ENCODE measurements at regions of chr6 and their contacts with region 1.

Region 1: DNA sequence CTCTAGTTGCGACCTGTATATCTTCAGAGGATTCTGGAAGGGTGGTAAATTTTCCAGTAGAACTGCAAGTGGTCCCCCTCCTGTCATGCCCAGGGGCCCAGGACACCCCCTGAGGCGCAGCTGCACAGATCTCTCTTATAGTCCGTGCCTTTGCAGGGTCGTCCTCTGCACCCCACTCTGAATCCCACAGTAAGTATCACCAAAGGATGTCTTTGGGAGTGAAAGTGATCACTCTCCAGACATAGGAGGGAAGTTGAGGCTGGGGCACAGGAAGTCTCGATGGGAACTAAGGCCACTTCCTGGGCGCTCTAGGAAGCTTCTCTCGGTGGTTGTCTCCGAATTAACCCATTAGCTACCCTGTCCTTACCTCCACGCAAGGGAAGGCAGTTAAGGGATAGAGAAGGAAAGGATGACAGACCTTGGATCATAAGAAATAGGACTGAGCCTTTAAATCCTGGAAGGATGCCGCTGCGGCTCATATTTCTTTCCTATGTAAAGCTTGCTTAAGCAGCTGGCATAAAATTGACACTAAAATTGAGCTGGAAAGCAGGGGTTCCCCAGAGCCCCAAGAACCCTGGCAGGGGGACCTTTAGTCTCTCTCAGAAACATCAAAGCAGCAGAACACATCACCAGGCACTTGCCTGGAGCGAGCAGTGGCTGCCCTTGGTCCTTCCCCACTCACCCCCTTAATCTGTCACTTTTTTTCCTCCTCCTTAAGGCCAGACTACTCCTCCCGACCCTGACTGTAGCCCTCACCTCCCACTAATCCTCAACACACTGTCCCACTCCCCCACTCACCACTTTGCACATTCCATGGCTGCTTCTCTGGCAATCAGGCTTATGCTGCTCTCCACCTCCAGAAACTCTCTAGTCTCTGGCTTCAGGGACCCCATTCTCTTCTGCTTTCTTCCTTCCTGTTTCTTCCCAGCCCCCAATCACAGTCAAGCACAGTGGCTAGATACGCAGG is at the start of gene ZKSCAN4:
- DNase-seq: peak; percentile 64 to 92 (median 85)
- ATAC-seq: peak; percentile 92
- H3K4me3 ChIP-seq: peak within 1 kb of the TSS; percentile 85 to 94
- H3K4me3 Mint-ChIP-seq: peak within 1 kb of the TSS; percentile 98
- H3K27ac ChIP-seq: peak within 1 kb of the TSS; percentile 50 to 66
- H3K27ac Mint-ChIP-seq: peak within 1 kb of the TSS; percentile 97
- H3K4me1 ChIP-seq: peaks cover 18% of the 10 kb centered on the region
- H3K4me1 Mint-ChIP-seq: peaks cover 40% of the 10 kb centered on the region
- H3K27me3 ChIP-seq: no peaks in the 10 kb centered on the region
- H3K27me3 Mint-ChIP-seq: peaks cover 3% of the 10 kb centered on the region
- CTCF ChIP-seq: no peak
- total RNA-seq, gene ZKSCAN4: 1.4 TPM

Region 2: DNA sequence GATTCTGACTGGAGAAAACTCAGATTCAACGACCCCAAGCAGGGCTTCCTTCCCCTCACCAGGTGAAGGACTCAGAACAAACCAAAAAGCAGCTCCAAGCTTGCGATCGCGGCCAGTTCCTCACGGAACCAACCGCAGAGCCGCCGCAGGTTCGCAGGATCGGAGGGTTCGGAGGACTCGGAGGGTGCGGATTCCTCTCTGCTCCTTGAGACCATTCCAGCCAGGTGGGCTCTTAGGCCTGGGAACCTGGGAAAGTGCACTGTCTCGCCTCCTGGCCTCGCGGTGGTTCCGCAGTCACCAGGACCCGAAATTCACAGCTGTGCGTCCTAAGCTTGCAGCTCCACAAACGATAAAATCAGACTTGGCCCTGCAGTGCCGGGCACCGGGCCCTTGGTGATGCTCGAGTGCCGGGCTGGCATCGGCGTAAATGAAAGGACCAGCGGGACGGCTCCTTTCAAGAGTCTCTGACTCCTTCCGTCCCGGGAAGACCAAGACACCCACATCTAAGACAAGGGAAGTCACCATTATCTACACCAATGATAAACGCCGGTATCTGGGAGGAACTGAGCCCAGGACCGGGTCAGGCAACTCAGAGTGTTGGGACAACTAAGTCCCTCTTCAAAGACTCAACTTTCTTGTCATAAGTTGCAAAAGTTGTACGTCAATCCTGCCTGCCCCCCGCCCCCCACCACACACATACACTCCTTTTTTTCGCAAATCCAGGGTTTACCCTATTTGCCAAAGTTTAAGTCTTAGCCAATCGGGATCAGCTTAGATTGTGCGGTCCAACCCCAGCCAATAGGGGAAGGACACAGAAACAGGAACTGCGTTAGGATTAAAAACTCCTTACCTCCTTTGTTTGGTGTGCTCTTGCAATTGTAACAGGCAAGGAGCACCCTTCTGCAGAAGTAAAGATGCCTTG is 1074.5 kb before region 1 on chr6:
- CTCF ChIA-PET with region 1: interaction called, 3 read pairs
- POLR2A ChIA-PET with region 1: no interaction called
- intact Hi-C with region 1: loop called in 1 of 2 experiments (anchors 10 kb)
- DNase-seq: peak; percentile 46 to 89 (median 72)
- ATAC-seq: peak; percentile 69
- H3K4me3 ChIP-seq: peak overlapping the region; percentile 95 to 100
- H3K4me3 Mint-ChIP-seq: peak overlapping the region; percentile 93
- H3K27ac ChIP-seq: peak overlapping the region; percentile 48 to 68
- H3K27ac Mint-ChIP-seq: peak overlapping the region; percentile 91
- H3K4me1 ChIP-seq: no peaks in the 10 kb centered on the region
- H3K4me1 Mint-ChIP-seq: peaks cover 17% of the 10 kb centered on the region
- H3K27me3 ChIP-seq: no peaks in the 10 kb centered on the region
- H3K27me3 Mint-ChIP-seq: peaks cover 3% of the 10 kb centered on the region
- CTCF ChIP-seq: peak; percentile 11

Region 3: GRCh38 chr6:28124102-28124970 is 128.0 kb before region 1 on chr6 and contains the start of gene ZSCAN16:
- CTCF ChIA-PET with region 1: no interaction called
- POLR2A ChIA-PET with region 1: no interaction called
- intact Hi-C with region 1: loop called in 1 of 2 experiments (anchors 1 kb)
- DNase-seq: peak; percentile 59 to 86 (median 76)
- ATAC-seq: peak; percentile 72
- H3K4me3 ChIP-seq: peak within 1 kb of the TSS; percentile 79 to 86
- H3K4me3 Mint-ChIP-seq: peak within 1 kb of the TSS; percentile 95
- H3K27ac ChIP-seq: peak within 1 kb of the TSS; percentile 76 to 89
- H3K27ac Mint-ChIP-seq: peak within 1 kb of the TSS; percentile 97
- H3K4me1 ChIP-seq: peaks cover 11% of the 10 kb centered on the region
- H3K4me1 Mint-ChIP-seq: peaks cover 42% of the 10 kb centered on the region
- H3K27me3 ChIP-seq: no peaks in the 10 kb centered on the region
- H3K27me3 Mint-ChIP-seq: no peaks in the 10 kb centered on the region
- CTCF ChIP-seq: no peak
- total RNA-seq, gene ZSCAN16: 5.2 to 6.0 TPM

Region 4: GRCh38 chr6:28225056-28225834 is 27.0 kb before region 1 on chr6 and contains the start of gene ZSCAN9:
- CTCF ChIA-PET with region 1: no interaction called
- POLR2A ChIA-PET with region 1: no interaction called
- intact Hi-C with region 1: loop called in 1 of 2 experiments (anchors 1 kb)
- DNase-seq: peak in 7 of 9 experiments; percentile 20 to 72 (median 52)
- ATAC-seq: peak; percentile 66
- H3K4me3 ChIP-seq: peak within 1 kb of the TSS; percentile 64 to 80
- H3K4me3 Mint-ChIP-seq: peak within 1 kb of the TSS; percentile 92
- H3K27ac ChIP-seq: peak within 1 kb of the TSS in 1 of 2 experiments; percentile 55
- H3K27ac Mint-ChIP-seq: peak within 1 kb of the TSS; percentile 42
- H3K4me1 ChIP-seq: peaks cover 12% of the 10 kb centered on the region
- H3K4me1 Mint-ChIP-seq: peaks cover 13% of the 10 kb centered on the region
- H3K27me3 ChIP-seq: peaks cover 5 to 9% of the 10 kb centered on the region in 2 experiments
- H3K27me3 Mint-ChIP-seq: peaks cover 45% of the 10 kb centered on the region
- CTCF ChIP-seq: no peak
- total RNA-seq, gene ZSCAN9: 2.1 to 3.0 TPM

Region 5: DNA sequence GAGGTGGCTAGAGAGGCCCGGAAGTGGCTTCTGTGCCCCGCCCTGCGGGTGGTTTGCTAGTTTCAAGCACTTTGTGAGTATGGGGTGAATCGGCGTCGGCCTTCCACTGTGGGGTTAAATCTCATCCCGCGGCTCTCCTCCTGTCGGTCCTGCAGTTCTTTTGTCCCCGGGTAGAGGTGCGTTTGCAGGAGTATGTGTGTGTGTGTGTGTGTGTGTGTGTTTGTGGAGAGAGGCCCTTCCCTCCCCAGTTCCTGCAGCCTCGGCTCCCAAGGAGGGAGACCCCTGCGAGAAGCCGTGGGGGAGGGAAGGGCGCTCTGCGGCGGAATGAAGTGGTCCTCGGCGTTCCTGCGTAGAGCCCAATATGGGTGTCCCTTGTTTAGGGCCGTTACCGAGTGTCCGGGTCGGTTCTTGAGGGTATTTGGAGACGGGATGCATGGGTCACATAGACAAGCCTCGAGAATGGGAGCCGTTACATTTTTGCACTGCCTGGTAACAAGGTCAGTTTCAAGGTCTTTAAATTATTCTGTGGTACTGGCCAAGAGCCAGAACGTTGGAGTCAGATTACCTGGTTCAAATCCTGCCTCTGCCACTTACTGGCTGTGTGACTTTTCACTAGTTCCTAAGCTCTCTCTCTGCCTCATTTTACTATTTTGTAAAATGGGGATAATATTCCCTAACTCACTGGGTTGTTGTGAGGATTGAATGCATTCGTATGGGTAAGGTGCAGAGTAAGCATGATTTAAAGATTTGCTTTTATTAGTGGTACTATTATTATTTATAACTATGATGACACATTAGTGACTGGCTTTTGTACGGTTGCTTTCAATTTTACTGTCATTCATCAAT is 97.8 kb after region 1 on chr6 and contains the start of gene ZKSCAN3:
- CTCF ChIA-PET with region 1: interaction called, 14 read pairs
- POLR2A ChIA-PET with region 1: interaction called, 4 read pairs
- intact Hi-C with region 1: loop called (anchors 1 kb)
- DNase-seq: peak; percentile 57 to 88 (median 82)
- ATAC-seq: peak; percentile 99
- H3K4me3 ChIP-seq: peak within 1 kb of the TSS; percentile 69 to 81
- H3K4me3 Mint-ChIP-seq: peak within 1 kb of the TSS; percentile 98
- H3K27ac ChIP-seq: peak within 1 kb of the TSS; percentile 54 to 55
- H3K27ac Mint-ChIP-seq: peak within 1 kb of the TSS; percentile 95
- H3K4me1 ChIP-seq: peaks cover 15% of the 10 kb centered on the region
- H3K4me1 Mint-ChIP-seq: peaks cover 36% of the 10 kb centered on the region
- H3K27me3 ChIP-seq: peaks cover 0 to 3% of the 10 kb centered on the region in 2 experiments
- H3K27me3 Mint-ChIP-seq: peaks cover 12% of the 10 kb centered on the region
- CTCF ChIP-seq: no peak
- total RNA-seq, gene ZKSCAN3: 0.61 to 0.68 TPM

Region 6: DNA sequence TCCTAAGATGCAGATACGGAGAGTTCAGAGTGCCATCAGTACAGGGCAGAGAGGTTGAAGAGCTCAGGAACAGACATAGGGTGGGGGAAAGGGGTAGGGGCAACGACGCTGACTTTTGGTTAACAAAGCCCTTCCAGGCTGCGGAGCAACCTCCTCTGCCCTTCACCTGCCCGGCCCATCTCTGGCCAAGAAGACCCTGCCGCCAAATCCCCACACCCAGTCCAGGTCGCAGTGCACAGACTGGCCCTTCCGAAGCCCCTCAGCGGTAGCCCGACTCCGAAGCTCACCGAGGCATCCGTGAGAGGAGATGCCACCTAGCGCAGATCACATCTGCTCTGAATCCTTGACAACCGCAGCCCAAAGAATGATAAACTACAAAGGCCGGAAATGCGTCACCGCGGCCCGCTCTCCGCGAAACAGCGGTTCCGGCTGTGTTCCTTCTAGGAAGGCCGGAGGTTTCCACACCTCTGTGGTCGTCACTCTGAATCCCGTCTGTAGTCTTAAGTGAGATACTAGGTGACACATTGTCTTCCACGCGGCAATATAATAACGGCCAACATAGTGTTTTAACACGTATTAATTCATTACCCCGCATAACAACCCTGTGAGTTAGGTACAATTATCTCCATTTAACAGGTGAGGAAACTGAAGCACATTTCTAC is 191.0 kb after region 1 on chr6 and contains the start of gene ZSCAN23:
- CTCF ChIA-PET with region 1: no interaction called
- POLR2A ChIA-PET with region 1: no interaction called
- intact Hi-C with region 1: loop called in 1 of 2 experiments (anchors 1 kb)
- DNase-seq: peak; percentile 69 to 95 (median 85)
- ATAC-seq: peak; percentile 90
- H3K4me3 ChIP-seq: peak within 1 kb of the TSS; percentile 53 to 63
- H3K4me3 Mint-ChIP-seq: peak within 1 kb of the TSS; percentile 89
- H3K27ac ChIP-seq: peak within 1 kb of the TSS; percentile 52 to 54
- H3K27ac Mint-ChIP-seq: peak within 1 kb of the TSS; percentile 89
- H3K4me1 ChIP-seq: peaks cover 28% of the 10 kb centered on the region
- H3K4me1 Mint-ChIP-seq: peaks cover 31% of the 10 kb centered on the region
- H3K27me3 ChIP-seq: peaks cover 0 to 11% of the 10 kb centered on the region in 2 experiments
- H3K27me3 Mint-ChIP-seq: peaks cover 38% of the 10 kb centered on the region
- CTCF ChIP-seq: no peak
- total RNA-seq, gene ZSCAN23: not detected

Measured in CD8-positive, alpha-beta T cell (primary cell).